Naive thymus-derived CD4-positive, alpha-beta T cell (primary cell): ENCODE measurements at regions of chr4 and their contacts with region 1.

Region 1: GRCh38 chr4:47383829-47384427 is 79.6 kb downstream of the COMMD8 start:
- DNase-seq: peak in 5 of 9 donors; percentile 1 to 19 (median 11)
- ATAC-seq: no peak
- H3K4me3 ChIP-seq: no peak overlapping the region
- H3K4me3 Mint-ChIP-seq: no peak overlapping the region
- H3K27ac ChIP-seq: no peak overlapping the region
- H3K27ac Mint-ChIP-seq: no peak overlapping the region
- H3K4me1 ChIP-seq: no peaks in the 10 kb centered on the region
- H3K4me1 Mint-ChIP-seq: peaks cover 0 to 4% (median 0%) of the 10 kb centered on the region in 7 donors
- H3K27me3 ChIP-seq: no peaks in the 10 kb centered on the region
- H3K27me3 Mint-ChIP-seq: peaks cover 5 to 32% (median 17%) of the 10 kb centered on the region in 5 donors

Region 2: DNA sequence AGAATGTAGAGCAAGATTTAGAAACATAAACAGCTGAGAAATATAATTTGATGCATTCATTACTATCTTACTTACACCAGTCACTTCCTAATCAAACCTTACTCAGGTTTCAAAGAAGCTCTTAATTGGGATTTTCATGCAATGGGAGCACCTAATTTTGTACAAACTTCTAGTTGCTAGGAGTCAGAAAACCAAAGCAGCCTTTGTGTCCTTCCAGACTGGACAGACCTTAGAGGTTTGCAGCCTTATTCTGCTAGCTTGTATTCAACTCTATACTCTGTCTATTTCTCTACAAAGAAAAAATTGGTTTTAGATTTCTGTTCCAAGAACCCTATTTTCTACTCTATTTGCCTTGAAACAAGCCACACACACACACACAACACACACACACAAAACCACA is 1013.4 kb before region 1 on chr4:
- CTCF ChIA-PET with region 1: no interaction called
- POLR2A ChIA-PET with region 1: no interaction called
- intact Hi-C with region 1: no loop called
- DNase-seq: no peak
- ATAC-seq: no peak
- H3K4me3 ChIP-seq: no peak overlapping the region
- H3K4me3 Mint-ChIP-seq: no peak overlapping the region
- H3K27ac ChIP-seq: no peak overlapping the region
- H3K27ac Mint-ChIP-seq: no peak overlapping the region
- H3K4me1 ChIP-seq: no peaks in the 10 kb centered on the region
- H3K4me1 Mint-ChIP-seq: no peaks in the 10 kb centered on the region
- H3K27me3 ChIP-seq: no peaks in the 10 kb centered on the region
- H3K27me3 Mint-ChIP-seq: no peaks in the 10 kb centered on the region

Region 3: DNA sequence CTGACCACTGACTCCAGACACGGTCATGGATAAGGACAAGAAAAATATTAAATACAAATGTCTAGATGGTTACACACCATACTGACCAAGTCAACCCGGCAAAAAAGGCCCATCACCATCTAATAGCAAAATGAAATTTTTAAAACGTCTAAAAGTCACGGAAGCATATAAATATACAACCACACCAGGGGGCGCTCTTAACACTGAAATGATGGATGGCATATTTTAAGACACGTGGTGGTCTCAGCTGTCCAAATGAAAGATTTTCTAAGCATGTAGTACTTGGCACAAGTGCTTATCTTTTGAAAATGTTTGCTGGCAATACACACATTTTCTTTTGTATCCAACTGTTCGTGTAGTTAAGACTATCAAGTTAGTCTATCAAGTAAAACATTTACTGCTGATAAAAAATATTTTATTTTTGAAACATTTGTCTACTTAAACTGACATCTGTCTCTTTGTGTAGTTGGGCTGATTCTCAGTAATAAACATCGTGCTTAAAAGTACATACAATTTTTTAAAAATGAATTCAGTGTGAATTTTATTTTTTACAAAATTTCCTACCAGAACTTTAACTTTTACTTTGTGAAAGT is 539.5 kb before region 1 on chr4:
- CTCF ChIA-PET with region 1: no interaction called
- POLR2A ChIA-PET with region 1: no interaction called
- intact Hi-C with region 1: loop called in 1 of 2 experiments (anchors 1 kb)
- DNase-seq: peak in 6 of 9 donors; percentile 1 to 24 (median 9)
- ATAC-seq: peak; percentile 61
- H3K4me3 ChIP-seq: no peak overlapping the region
- H3K4me3 Mint-ChIP-seq: no peak overlapping the region
- H3K27ac ChIP-seq: no peak overlapping the region
- H3K27ac Mint-ChIP-seq: no peak overlapping the region
- H3K4me1 ChIP-seq: no peaks in the 10 kb centered on the region
- H3K4me1 Mint-ChIP-seq: peaks cover 0 to 2% (median 0%) of the 10 kb centered on the region in 7 donors
- H3K27me3 ChIP-seq: no peaks in the 10 kb centered on the region
- H3K27me3 Mint-ChIP-seq: peaks cover 0 to 11% (median 5%) of the 10 kb centered on the region in 5 donors

Region 4: DNA sequence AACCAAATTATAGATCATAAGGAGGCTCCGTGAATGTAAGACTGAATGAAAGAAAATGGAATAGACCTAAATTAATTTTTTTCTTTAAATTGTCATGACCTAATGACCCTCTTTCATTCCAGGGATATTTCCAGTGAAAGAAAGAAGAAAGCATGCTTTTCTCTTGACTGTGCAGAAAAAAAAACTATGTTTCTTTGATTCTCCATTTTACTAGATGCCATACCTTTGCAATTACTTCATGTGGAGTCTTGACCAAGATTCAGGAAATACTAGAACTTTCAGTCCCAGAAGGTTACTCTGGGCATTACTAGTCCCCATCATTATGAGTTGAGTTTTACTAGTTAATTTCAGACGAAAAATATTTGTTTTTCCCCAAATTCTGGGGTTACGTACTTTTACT is 86.0 kb after region 1 on chr4:
- CTCF ChIA-PET with region 1: no interaction called
- POLR2A ChIA-PET with region 1: no interaction called
- intact Hi-C with region 1: no loop called
- DNase-seq: no peak
- ATAC-seq: no peak
- H3K4me3 ChIP-seq: no peak overlapping the region
- H3K4me3 Mint-ChIP-seq: no peak overlapping the region
- H3K27ac ChIP-seq: no peak overlapping the region
- H3K27ac Mint-ChIP-seq: no peak overlapping the region
- H3K4me1 ChIP-seq: no peaks in the 10 kb centered on the region
- H3K4me1 Mint-ChIP-seq: peaks cover 0 to 2% (median 0%) of the 10 kb centered on the region in 7 donors
- H3K27me3 ChIP-seq: no peaks in the 10 kb centered on the region
- H3K27me3 Mint-ChIP-seq: peaks cover 5 to 27% (median 12%) of the 10 kb centered on the region in 5 donors